ENCODE measurements at regions of chr12 and their contacts with region 1.

Region 1: DNA sequence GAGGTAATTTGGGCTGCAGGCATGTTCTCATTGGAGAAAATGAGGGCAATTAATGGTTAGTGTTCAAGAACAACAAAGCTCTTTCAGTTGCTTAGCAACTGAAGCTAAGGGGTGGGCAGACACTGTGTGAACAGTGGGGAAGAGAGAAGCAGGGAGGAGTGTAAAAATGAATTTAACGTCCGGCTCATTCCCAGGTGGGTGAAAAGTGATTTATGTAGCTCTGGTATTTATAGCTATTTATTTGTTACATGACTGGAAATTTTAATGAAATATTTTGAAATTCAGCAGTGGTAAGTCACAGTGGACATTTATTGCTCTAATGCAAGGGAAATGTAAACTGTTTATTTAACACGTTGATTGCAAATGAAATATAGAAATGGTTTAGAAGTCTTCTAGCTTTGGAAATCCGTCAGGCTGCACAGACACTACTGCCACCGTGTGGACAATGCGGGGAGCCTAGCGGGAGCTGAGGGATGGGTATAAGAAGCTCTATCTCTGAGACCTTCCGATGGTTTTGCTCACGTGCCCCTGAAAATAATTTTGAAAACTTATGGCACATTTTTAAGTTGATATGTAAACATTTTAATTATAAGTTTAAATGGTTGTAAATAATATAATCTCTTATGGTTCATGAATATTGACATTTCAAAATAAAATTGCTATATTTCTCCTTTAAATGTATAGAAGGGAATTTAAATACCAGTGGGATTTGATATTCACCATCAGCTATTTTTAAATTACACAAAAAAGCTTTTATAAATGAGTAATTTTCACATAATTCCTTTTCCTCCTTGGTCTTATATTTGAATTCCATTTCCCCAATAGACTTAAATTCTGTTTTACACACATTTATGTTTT is 54.4 kb downstream of the E2F7 start:
- DNase-seq: peak; percentile 89
- ATAC-seq: peak; percentile 96
- H3K4me3 ChIP-seq: no peak overlapping the region
- H3K27ac ChIP-seq: no peak overlapping the region; the same call in 1 of the 2 replicates
- H3K4me1 ChIP-seq: peaks cover 5% of the 10 kb centered on the region
- H3K27me3 ChIP-seq: no peaks in the 10 kb centered on the region
- CTCF ChIP-seq: peak; percentile 96
- POLR2A ChIP-seq: peak; percentile 48; the same call in 1 of the 2 replicates
- RAD21 ChIP-seq: peak; percentile 97

Region 2: DNA sequence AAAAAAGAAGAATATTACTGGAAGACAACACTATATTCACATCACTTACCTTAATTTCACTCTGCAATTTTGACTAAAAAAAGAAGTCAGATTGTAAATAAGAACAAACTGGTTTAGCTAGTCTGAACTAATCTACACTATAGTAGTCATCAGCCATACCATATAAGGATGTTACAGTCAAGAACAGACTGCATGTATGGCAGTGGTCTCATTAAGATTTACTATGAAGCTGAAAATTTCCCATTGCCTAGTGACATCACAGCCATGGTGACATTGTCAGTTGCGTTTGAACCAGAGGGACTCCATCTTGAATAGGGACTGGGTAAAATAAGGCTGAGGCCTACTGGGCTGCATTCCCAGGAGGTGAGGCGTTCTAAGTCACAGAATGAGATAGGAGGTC is 502.7 kb before region 1 on chr12:
- CTCF ChIA-PET with region 1: no interaction called
- POLR2A ChIA-PET with region 1: no interaction called
- dilution Hi-C with region 1: no loop called
- in situ Hi-C with region 1: no loop called
- intact Hi-C with region 1: no loop called
- DNase-seq: no peak
- ATAC-seq: no peak
- H3K4me3 ChIP-seq: no peak overlapping the region
- H3K27ac ChIP-seq: no peak overlapping the region
- H3K4me1 ChIP-seq: peaks cover 2% of the 10 kb centered on the region; the same call in 1 of the 2 replicates
- H3K27me3 ChIP-seq: no peaks in the 10 kb centered on the region
- CTCF ChIP-seq: no peak
- POLR2A ChIP-seq: no peak
- RAD21 ChIP-seq: no peak

Region 3: GRCh38 chr12:76685246-76685678 is 325.7 kb before region 1 on chr12:
- CTCF ChIA-PET with region 1: no interaction called
- POLR2A ChIA-PET with region 1: no interaction called
- dilution Hi-C with region 1: no loop called
- in situ Hi-C with region 1: no loop called
- intact Hi-C with region 1: loop called (anchors 5 kb)
- DNase-seq: peak; percentile 55
- ATAC-seq: peak; percentile 38
- H3K4me3 ChIP-seq: no peak overlapping the region
- H3K27ac ChIP-seq: peak overlapping the region; percentile 4; the same call in 1 of the 2 replicates
- H3K4me1 ChIP-seq: peaks cover 15% of the 10 kb centered on the region
- H3K27me3 ChIP-seq: no peaks in the 10 kb centered on the region
- CTCF ChIP-seq: no peak
- POLR2A ChIP-seq: no peak
- RAD21 ChIP-seq: no peak

Region 4: DNA sequence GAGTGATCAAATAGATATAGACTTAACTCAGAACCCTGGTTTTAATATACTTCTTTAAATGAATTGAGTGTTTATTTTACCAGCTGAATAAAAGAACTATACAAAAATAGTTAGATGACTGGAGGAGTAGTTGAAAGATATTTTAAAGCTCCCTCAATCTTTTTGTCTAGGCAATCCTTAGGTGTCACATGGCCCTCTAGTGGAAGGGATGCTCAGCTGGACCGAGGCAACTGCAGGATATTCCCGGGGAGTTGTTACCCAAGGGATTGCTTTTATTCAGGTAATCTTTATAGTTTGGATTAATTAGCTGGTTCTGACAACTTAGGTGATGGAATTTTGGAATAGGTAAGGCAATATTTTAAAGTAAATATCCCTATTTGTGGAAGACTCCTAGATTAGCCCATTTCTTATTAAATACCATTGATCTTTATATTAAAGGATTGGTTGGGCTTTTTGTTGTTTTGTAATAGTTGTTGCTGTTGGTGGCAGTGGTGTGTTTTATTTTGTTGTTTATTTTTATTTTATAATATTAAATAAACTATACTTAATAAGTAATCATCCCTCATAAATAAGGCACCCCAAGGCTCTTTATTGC is 189.9 kb before region 1 on chr12:
- CTCF ChIA-PET with region 1: interaction called, 10 read pairs
- POLR2A ChIA-PET with region 1: no interaction called
- dilution Hi-C with region 1: no loop called
- in situ Hi-C with region 1: no loop called
- intact Hi-C with region 1: loop called (anchors 1 kb)
- DNase-seq: peak; percentile 47
- ATAC-seq: peak; percentile 69
- H3K4me3 ChIP-seq: no peak overlapping the region
- H3K27ac ChIP-seq: no peak overlapping the region
- H3K4me1 ChIP-seq: no peaks in the 10 kb centered on the region; the same call in 1 of the 2 replicates
- H3K27me3 ChIP-seq: no peaks in the 10 kb centered on the region
- CTCF ChIP-seq: peak; percentile 59
- POLR2A ChIP-seq: no peak
- RAD21 ChIP-seq: peak; percentile 49

Region 5: DNA sequence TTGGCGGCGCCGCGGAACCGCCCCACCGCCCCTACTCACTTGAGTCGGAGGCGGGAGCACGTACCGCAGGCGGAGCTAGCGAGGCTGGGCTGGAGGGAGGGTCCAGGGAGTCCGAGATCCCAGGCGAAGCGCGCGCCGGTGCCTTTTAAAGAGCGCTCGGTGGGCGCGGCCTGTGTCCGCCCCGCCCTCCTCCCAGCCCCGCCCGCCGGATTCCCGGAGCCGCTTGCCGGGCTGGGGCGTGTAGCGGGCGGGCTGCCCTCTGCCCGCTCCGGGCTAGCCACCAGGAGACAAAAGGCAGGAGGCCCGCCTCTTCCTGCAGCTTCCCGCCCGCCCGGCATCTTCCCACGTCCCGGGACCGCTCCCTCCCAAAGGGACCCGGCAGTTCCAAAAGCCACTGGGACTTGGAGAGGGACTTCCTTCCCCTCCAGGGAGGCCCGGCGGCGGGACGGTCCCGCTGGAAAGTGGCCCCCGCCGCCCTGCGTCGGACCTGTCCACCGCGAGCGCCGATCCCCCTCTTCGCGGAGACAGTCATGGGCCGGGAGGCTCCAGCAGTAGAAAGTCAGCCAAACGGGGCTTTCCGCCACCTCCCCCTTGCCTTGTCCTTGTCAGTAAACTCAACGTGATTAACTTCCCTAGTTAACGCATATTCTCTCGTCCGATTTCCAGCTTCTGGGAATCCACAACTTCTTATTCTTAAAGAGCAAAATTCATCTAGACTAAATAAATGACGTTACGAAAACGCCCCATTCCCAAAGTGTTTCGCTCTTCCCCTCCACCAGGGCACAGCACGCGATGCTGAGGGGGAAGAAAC is 131.8 kb before region 1 on chr12 and contains the start of gene CSRP2:
- CTCF ChIA-PET with region 1: interaction called, 15 read pairs
- POLR2A ChIA-PET with region 1: no interaction called
- dilution Hi-C with region 1: no loop called
- in situ Hi-C with region 1: no loop called
- intact Hi-C with region 1: loop called (anchors 2 kb)
- DNase-seq: peak; percentile 87
- ATAC-seq: peak; percentile 91
- H3K4me3 ChIP-seq: peak within 1 kb of the TSS; percentile 64
- H3K27ac ChIP-seq: peak within 1 kb of the TSS; percentile 89
- H3K4me1 ChIP-seq: peaks cover 14% of the 10 kb centered on the region
- H3K27me3 ChIP-seq: no peaks in the 10 kb centered on the region
- CTCF ChIP-seq: peak; percentile 34
- POLR2A ChIP-seq: peak; percentile 97
- RAD21 ChIP-seq: peak; percentile 35
- total RNA-seq, gene CSRP2: 156 and 157 TPM in 2 replicates

Region 6: GRCh38 chr12:77433799-77434198 is 422.9 kb after region 1 on chr12:
- CTCF ChIA-PET with region 1: no interaction called
- POLR2A ChIA-PET with region 1: no interaction called
- dilution Hi-C with region 1: no loop called
- in situ Hi-C with region 1: no loop called
- intact Hi-C with region 1: no loop called
- DNase-seq: peak; percentile 6
- ATAC-seq: no peak
- H3K4me3 ChIP-seq: no peak overlapping the region
- H3K27ac ChIP-seq: no peak overlapping the region
- H3K4me1 ChIP-seq: no peaks in the 10 kb centered on the region
- H3K27me3 ChIP-seq: no peaks in the 10 kb centered on the region
- CTCF ChIP-seq: no peak
- POLR2A ChIP-seq: no peak
- RAD21 ChIP-seq: no peak